HepG2 (cell line): ENCODE measurements at regions of chr5 and their contacts with region 1.

Region 1: DNA sequence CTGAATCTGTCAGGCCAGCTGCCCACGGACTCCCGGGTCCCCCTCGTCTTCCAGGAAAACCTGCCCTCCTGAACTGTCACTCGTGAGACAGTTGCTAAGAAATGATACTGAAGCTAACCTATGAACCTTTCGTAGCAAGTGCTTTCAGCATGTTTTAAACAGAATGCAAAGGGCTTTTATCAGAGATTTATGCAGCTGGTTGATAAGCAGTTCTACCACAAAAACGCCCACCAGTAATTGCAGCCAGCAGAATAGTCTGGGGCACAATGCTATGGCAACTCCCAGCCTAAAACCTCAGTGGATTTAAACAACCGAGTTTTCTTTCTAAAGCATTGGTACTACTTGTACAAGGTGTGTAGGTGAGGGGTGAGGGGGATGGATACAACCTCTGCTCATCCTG is 97.5 kb downstream of the IRX2 start:
- DNase-seq: no peak
- ATAC-seq: no peak
- H3K4me3 ChIP-seq: no peak overlapping the region
- H3K27ac ChIP-seq: no peak overlapping the region
- H3K4me1 ChIP-seq: no peaks in the 10 kb centered on the region
- H3K27me3 ChIP-seq: peaks cover 2 to 17% of the 10 kb centered on the region in 2 experiments
- CTCF ChIP-seq: no peak
- EP300 ChIP-seq: no peak
- POLR2A ChIP-seq: no peak
- RAD21 ChIP-seq: no peak

Region 2: GRCh38 chr5:2611659-2612058 is 42.3 kb before region 1 on chr5:
- CTCF ChIA-PET with region 1: no interaction called
- POLR2A ChIA-PET with region 1: no interaction called
- in situ Hi-C with region 1: no loop called
- intact Hi-C with region 1: no loop called
- DNase-seq: no peak
- ATAC-seq: no peak
- H3K4me3 ChIP-seq: no peak overlapping the region
- H3K27ac ChIP-seq: no peak overlapping the region
- H3K4me1 ChIP-seq: no peaks in the 10 kb centered on the region
- H3K27me3 ChIP-seq: peaks cover 1 to 12% of the 10 kb centered on the region in 2 experiments; a peak in 3 of 5 replicates
- CTCF ChIP-seq: no peak
- EP300 ChIP-seq: no peak
- POLR2A ChIP-seq: no peak
- RAD21 ChIP-seq: no peak

Region 3: GRCh38 chr5:2642684-2643345 is 11.2 kb before region 1 on chr5:
- CTCF ChIA-PET with region 1: no interaction called
- POLR2A ChIA-PET with region 1: no interaction called
- in situ Hi-C with region 1: no loop called
- intact Hi-C with region 1: no loop called
- DNase-seq: no peak
- ATAC-seq: no peak
- H3K4me3 ChIP-seq: no peak overlapping the region
- H3K27ac ChIP-seq: no peak overlapping the region
- H3K4me1 ChIP-seq: no peaks in the 10 kb centered on the region
- H3K27me3 ChIP-seq: peaks cover 0 to 39% of the 10 kb centered on the region in 2 experiments; a peak in 3 of 5 replicates
- CTCF ChIP-seq: no peak
- EP300 ChIP-seq: no peak
- POLR2A ChIP-seq: no peak
- RAD21 ChIP-seq: no peak

Region 4: DNA sequence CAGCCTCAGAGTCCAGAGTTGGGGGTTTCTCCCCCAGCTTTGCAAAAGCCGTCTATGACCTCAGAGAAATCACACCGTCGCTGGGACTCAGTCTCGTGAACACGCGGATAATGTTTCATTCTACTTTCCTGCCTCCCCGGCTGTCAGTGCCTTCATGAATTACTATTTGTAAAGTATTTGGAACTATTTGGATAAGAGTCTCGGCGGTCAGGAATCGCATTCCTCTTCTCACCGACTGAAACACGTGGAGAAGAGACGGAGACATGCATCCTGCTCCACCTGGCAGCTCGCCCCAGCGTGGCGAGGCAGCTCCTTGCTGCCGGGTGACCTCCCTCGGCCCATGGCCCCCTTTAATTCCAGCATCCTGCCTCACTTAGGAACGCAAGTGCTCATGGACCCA is 73.6 kb after region 1 on chr5:
- CTCF ChIA-PET with region 1: no interaction called
- POLR2A ChIA-PET with region 1: no interaction called
- in situ Hi-C with region 1: no loop called
- intact Hi-C with region 1: loop called (anchors 2 kb)
- DNase-seq: no peak
- ATAC-seq: no peak
- H3K4me3 ChIP-seq: no peak overlapping the region
- H3K27ac ChIP-seq: no peak overlapping the region
- H3K4me1 ChIP-seq: no peaks in the 10 kb centered on the region
- H3K27me3 ChIP-seq: peaks cover 0 to 35% of the 10 kb centered on the region in 2 experiments; a peak in 2 of 5 replicates
- CTCF ChIP-seq: no peak
- EP300 ChIP-seq: no peak
- POLR2A ChIP-seq: no peak
- RAD21 ChIP-seq: no peak